ENCODE measurements at regions of chr1 and their contacts with region 1.

Region 1: GRCh38 chr1:26853156-26853555 is 9.8 kb upstream of the SFN start:
- DNase-seq: peak; percentile 58 to 90 (median 80)
- ATAC-seq: peak; percentile 94
- H3K4me3 ChIP-seq: no peak overlapping the region
- H3K4me3 Mint-ChIP-seq: no peak overlapping the region
- H3K27ac ChIP-seq: no peak overlapping the region
- H3K27ac Mint-ChIP-seq: no peak overlapping the region
- H3K4me1 ChIP-seq: no peaks in the 10 kb centered on the region
- H3K4me1 Mint-ChIP-seq: no peaks in the 10 kb centered on the region
- H3K27me3 ChIP-seq: no peaks in the 10 kb centered on the region
- H3K27me3 Mint-ChIP-seq: no peaks in the 10 kb centered on the region
- CTCF ChIP-seq: peak; percentile 78

Region 2: DNA sequence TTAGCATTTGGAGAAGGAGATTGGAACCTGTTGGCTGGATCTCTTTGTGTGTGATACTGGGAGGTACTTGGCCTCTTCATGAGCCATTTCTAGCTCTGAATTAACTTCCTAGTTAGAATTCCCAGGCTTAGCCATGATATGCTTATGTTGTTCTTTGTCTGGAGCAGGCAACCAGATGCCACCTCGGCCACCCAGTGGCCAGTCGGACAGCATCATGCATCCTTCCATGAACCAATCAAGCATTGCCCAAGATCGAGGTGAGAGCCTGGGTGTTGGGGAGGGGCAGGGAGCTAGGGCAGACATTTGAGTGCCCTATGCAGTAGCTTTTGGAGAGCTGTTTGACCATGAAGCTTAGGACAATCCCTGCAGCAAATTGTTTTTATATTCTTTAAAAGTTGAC is 91.9 kb before region 1 on chr1:
- CTCF ChIA-PET with region 1: no interaction called
- POLR2A ChIA-PET with region 1: no interaction called
- intact Hi-C with region 1: no loop called
- DNase-seq: peak in 1 of 9 experiments; percentile 18
- ATAC-seq: peak; percentile 31
- H3K4me3 ChIP-seq: no peak overlapping the region
- H3K4me3 Mint-ChIP-seq: no peak overlapping the region
- H3K27ac ChIP-seq: no peak overlapping the region
- H3K27ac Mint-ChIP-seq: peak overlapping the region; percentile 62
- H3K4me1 ChIP-seq: peaks cover 16% of the 10 kb centered on the region
- H3K4me1 Mint-ChIP-seq: peaks cover 35% of the 10 kb centered on the region
- H3K27me3 ChIP-seq: no peaks in the 10 kb centered on the region
- H3K27me3 Mint-ChIP-seq: no peaks in the 10 kb centered on the region
- CTCF ChIP-seq: no peak

Region 3: DNA sequence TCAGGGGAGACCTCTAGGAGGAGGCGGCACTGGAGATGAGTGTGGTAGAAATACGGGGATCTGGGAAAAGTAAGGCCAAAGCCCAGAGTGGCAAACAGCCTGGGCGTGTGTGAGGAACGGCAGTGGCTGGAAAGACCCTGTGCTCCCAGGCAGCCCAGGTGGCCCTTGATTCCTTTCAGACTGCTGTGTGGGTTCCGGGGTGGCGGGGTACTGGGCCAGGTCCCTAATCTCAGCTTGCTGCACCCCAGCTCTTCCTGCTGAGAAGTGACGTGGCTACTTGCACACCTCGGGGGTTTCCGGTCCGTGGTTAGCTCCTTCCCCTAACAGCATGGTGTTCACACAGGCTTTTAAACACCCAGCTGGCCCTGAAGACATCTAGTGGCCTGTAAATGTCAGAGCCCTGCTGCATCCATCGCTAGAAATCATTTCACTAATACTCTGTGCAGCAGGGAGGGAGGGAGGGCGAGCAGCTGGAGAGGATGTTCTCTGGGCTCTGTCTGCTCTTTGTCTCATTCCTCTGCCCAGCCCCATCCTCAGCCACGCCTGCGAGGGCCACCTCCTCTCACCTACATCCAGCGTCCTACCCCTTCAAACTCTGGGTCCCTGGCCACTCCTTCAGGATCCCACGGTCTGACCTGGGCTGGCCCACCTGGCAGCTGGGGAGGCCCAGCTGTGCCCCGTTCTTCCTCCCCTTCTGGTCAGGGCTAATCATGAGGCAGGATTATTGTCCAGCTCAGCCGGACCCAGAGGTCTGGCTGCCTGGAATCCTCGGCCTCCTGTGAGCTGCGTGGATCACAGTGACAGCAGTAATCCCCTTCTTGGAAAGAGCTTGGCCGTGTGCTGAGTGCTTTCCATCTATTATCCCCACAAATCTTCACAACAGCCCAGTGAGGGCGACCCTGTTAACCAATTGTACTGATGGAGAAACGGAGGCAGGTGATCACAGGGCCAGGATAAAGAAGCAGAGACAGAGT is 19.4 kb before region 1 on chr1:
- CTCF ChIA-PET with region 1: interaction called, 11 read pairs
- POLR2A ChIA-PET with region 1: interaction called, 6 read pairs
- intact Hi-C with region 1: no loop called
- DNase-seq: peak; percentile 74 to 99 (median 89)
- ATAC-seq: peak; percentile 94
- H3K4me3 ChIP-seq: peak overlapping the region; percentile 27 to 31
- H3K4me3 Mint-ChIP-seq: peak overlapping the region; percentile 73
- H3K27ac ChIP-seq: peak overlapping the region; percentile 88 to 98
- H3K27ac Mint-ChIP-seq: peak overlapping the region; percentile 100
- H3K4me1 ChIP-seq: peaks cover 51% of the 10 kb centered on the region
- H3K4me1 Mint-ChIP-seq: peaks cover 74% of the 10 kb centered on the region
- H3K27me3 ChIP-seq: no peaks in the 10 kb centered on the region
- H3K27me3 Mint-ChIP-seq: no peaks in the 10 kb centered on the region
- CTCF ChIP-seq: peak; percentile 53

Region 4: DNA sequence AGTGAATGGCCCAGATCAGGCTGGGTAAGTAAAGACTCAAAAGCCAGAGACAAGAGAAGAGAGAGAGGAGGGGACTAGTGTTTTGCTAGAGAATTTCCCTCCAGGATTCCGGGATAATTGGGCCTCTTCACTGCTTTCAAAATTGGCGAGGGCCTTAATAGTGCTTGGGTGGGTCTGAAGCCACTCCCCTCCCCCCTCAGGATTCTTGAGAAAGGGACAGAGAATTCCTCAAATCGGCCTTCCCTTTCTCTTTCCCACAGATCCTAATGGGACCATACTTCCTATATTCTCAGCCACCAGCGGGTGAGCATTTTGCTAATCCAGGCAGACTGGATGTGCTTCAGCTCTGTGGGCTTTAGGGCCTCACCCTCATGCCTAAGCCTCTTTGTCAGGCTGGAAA is 21.7 kb after region 1 on chr1:
- CTCF ChIA-PET with region 1: interaction called, 38 read pairs
- POLR2A ChIA-PET with region 1: no interaction called
- intact Hi-C with region 1: loop called (anchors 1 kb)
- DNase-seq: no peak
- ATAC-seq: no peak
- H3K4me3 ChIP-seq: no peak overlapping the region
- H3K4me3 Mint-ChIP-seq: no peak overlapping the region
- H3K27ac ChIP-seq: no peak overlapping the region
- H3K27ac Mint-ChIP-seq: no peak overlapping the region
- H3K4me1 ChIP-seq: no peaks in the 10 kb centered on the region
- H3K4me1 Mint-ChIP-seq: no peaks in the 10 kb centered on the region
- H3K27me3 ChIP-seq: no peaks in the 10 kb centered on the region
- H3K27me3 Mint-ChIP-seq: no peaks in the 10 kb centered on the region
- CTCF ChIP-seq: no peak

Region 5: GRCh38 chr1:26882696-26883463 is 29.7 kb after region 1 on chr1:
- CTCF ChIA-PET with region 1: interaction called, 38 read pairs
- POLR2A ChIA-PET with region 1: no interaction called
- intact Hi-C with region 1: loop called (anchors 1 kb)
- DNase-seq: no peak
- ATAC-seq: no peak
- H3K4me3 ChIP-seq: no peak overlapping the region
- H3K4me3 Mint-ChIP-seq: no peak overlapping the region
- H3K27ac ChIP-seq: no peak overlapping the region
- H3K27ac Mint-ChIP-seq: no peak overlapping the region
- H3K4me1 ChIP-seq: no peaks in the 10 kb centered on the region
- H3K4me1 Mint-ChIP-seq: peaks cover 18% of the 10 kb centered on the region
- H3K27me3 ChIP-seq: no peaks in the 10 kb centered on the region
- H3K27me3 Mint-ChIP-seq: no peaks in the 10 kb centered on the region
- CTCF ChIP-seq: no peak

Region 6: GRCh38 chr1:26986658-26987057 is 133.5 kb after region 1 on chr1:
- CTCF ChIA-PET with region 1: no interaction called
- POLR2A ChIA-PET with region 1: no interaction called
- intact Hi-C with region 1: no loop called
- DNase-seq: no peak
- ATAC-seq: no peak
- H3K4me3 ChIP-seq: no peak overlapping the region
- H3K4me3 Mint-ChIP-seq: no peak overlapping the region
- H3K27ac ChIP-seq: no peak overlapping the region
- H3K27ac Mint-ChIP-seq: no peak overlapping the region
- H3K4me1 ChIP-seq: no peaks in the 10 kb centered on the region
- H3K4me1 Mint-ChIP-seq: no peaks in the 10 kb centered on the region
- H3K27me3 ChIP-seq: peaks cover 0 to 14% of the 10 kb centered on the region in 2 experiments
- H3K27me3 Mint-ChIP-seq: peaks cover 39% of the 10 kb centered on the region
- CTCF ChIP-seq: no peak

Measured in CD8-positive, alpha-beta T cell (primary cell).